Activated T-helper 2 cell treated with anti-CD3 and anti-CD28 coated beads, Interferon-gamma antibody, Interleukin-2, Interleukin-4, amounts not matched to agents 10 μg/mL and 5 μg/mL and 100 μg/mL, durations not matched to agents 14 hours and 24 hours and 36 hours (primary cell): ENCODE measurements at regions of chr4 and their contacts with region 1.

Region 1: GRCh38 chr4:121182296-121182695 is 18.2 kb upstream of the TNIP3 start:
- DNase-seq: no peak
- H3K4me3 Mint-ChIP-seq: peak overlapping the region; percentile 73
- H3K27ac Mint-ChIP-seq: peak overlapping the region; percentile 87
- H3K4me1 Mint-ChIP-seq: peaks cover 51% of the 10 kb centered on the region
- H3K27me3 Mint-ChIP-seq: peaks cover 4% of the 10 kb centered on the region

Region 2: GRCh38 chr4:121139533-121140222 is 42.6 kb before region 1 on chr4:
- intact Hi-C with region 1: loop called (anchors 1 kb)
- DNase-seq: no peak
- H3K4me3 Mint-ChIP-seq: no peak overlapping the region
- H3K27ac Mint-ChIP-seq: peak overlapping the region; percentile 58
- H3K4me1 Mint-ChIP-seq: peaks cover 47% of the 10 kb centered on the region
- H3K27me3 Mint-ChIP-seq: no peaks in the 10 kb centered on the region

Region 3: DNA sequence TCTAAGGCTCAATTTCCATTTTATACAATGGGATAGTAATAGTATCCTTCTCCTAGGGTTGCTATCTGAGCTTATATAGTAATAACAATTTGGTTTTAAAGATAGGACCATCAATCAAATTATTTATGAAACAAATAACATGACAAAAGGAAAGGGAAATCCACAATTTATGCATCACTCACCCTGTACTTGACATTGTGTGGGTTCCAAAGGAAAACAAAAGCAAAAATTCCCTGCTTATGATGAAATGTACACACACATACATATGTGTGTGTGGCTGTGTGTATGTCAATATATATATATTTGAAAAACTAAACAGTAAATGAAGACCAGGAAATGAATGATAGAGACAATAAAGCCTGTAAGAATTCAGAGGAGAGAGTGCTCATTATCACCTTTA is 15.3 kb before region 1 on chr4:
- intact Hi-C with region 1: loop called (anchors 2 kb)
- DNase-seq: no peak
- H3K4me3 Mint-ChIP-seq: no peak overlapping the region
- H3K27ac Mint-ChIP-seq: no peak overlapping the region
- H3K4me1 Mint-ChIP-seq: peaks cover 39% of the 10 kb centered on the region
- H3K27me3 Mint-ChIP-seq: peaks cover 13% of the 10 kb centered on the region

Region 4: GRCh38 chr4:121192480-121192879 is 10.2 kb after region 1 on chr4:
- intact Hi-C with region 1: loop called (anchors 1 kb)
- DNase-seq: no peak
- H3K4me3 Mint-ChIP-seq: peak overlapping the region; percentile 55
- H3K27ac Mint-ChIP-seq: no peak overlapping the region
- H3K4me1 Mint-ChIP-seq: peaks cover 52% of the 10 kb centered on the region
- H3K27me3 Mint-ChIP-seq: no peaks in the 10 kb centered on the region

Region 5: DNA sequence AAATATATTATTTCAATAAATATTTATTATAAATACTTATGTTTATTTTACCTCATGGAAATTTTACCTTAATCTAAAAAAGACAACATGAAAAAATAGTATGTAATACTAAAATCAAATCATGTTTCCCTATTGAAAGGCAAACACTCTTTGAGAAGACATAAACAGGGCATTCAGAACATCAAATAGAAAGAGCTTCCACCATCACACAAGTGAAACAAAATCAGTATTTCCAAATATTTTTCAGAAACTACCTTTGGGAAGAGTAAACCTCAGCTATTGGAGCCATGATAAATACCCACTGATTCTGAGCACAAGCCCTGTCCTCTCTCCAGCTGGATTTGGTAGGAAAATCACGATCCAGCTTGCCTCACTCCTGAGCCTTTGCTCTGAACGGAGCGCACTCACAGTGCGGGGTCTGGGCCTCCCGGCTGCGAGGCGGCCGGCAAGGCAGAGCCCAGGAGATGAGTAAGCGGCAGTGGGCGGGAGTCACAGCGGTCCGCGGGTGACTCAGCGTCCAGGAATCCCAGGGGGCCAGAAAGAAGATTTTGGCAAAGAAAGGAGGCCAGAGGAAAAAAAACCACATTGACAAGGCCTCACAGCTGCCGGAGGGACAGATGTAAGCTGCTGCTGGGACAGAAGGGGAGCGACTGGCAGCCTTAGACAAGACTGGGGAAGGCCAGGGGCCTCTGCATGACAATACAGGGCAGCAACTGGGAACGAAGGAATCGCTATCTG is 529.1 kb after region 1 on chr4:
- intact Hi-C with region 1: loop called (anchors 5 kb)
- DNase-seq: no peak
- H3K4me3 Mint-ChIP-seq: no peak overlapping the region
- H3K27ac Mint-ChIP-seq: no peak overlapping the region
- H3K4me1 Mint-ChIP-seq: peaks cover 49% of the 10 kb centered on the region
- H3K27me3 Mint-ChIP-seq: peaks cover 50% of the 10 kb centered on the region